Naive thymus-derived CD4-positive, alpha-beta T cell (primary cell): ENCODE measurements at regions of chr2 and their contacts with region 1.

Region 1: GRCh38 chr2:98669675-98670074 is 61.3 kb downstream of the MGAT4A start:
- DNase-seq: no peak
- ATAC-seq: no peak
- H3K4me3 ChIP-seq: no peak overlapping the region
- H3K4me3 Mint-ChIP-seq: no peak overlapping the region
- H3K27ac ChIP-seq: peak overlapping the region; percentile 6
- H3K27ac Mint-ChIP-seq: peak overlapping the region in 8 of 9 donors; percentile 55 to 89 (median 80)
- H3K4me1 ChIP-seq: peaks cover 21 to 29% of the 10 kb centered on the region in 2 donors
- H3K4me1 Mint-ChIP-seq: peaks cover 28 to 91% (median 74%) of the 10 kb centered on the region in 7 donors
- H3K27me3 ChIP-seq: no peaks in the 10 kb centered on the region
- H3K27me3 Mint-ChIP-seq: no peaks in the 10 kb centered on the region

Region 2: DNA sequence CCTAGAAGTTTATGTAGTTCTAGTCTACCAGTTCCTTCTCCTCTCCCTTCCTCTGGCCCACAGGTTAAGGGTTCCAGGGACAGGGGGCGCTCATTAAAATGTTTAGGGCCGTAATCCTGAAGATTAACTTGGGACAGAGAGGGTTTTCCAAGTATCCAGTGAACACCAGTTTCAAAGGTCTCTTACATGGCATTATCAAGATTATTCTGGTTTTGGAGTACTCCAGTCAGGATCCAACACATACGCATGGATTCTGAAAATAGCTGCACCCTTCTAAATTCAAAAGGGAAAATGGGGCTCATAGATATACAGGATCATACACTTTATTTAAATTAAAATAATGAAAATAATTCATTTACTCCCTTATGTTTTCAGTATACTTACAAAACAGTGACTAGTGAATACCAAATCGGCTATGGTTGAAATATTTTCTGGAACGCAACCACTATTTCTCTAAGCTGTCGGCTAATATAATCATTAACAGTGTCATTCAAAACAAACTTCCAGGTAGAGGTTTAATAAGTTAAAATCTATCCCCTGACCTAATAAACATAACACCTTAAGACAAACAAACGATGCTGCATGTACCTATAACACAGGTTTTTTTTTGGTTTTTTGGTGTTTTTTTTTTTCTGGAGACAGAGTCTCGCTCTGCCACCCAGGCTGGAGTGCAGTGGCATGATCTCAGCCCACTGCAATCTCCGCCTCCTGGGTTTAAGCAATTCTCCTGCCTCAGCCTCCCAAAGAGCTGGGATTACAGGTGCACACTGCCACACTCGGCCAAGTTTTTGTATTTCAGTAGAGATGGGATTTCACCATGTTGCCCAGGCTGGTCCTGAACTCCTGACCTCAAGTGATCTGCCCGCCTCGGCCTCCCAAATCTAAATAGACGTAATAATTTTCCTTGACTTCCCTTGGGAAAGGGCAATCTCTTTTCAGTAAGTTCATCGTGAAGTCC is 16.5 kb after region 1 on chr2:
- CTCF ChIA-PET with region 1: interaction called, 4 read pairs
- POLR2A ChIA-PET with region 1: interaction called, 7 read pairs
- intact Hi-C with region 1: loop called in 1 of 2 experiments (anchors 2 kb)
- DNase-seq: no peak
- ATAC-seq: no peak
- H3K4me3 ChIP-seq: no peak overlapping the region
- H3K4me3 Mint-ChIP-seq: peak overlapping the region in 4 of 10 donors; percentile 38 to 62 (median 42)
- H3K27ac ChIP-seq: peak overlapping the region; percentile 36
- H3K27ac Mint-ChIP-seq: peak overlapping the region in 8 of 9 donors; percentile 66 to 92 (median 82)
- H3K4me1 ChIP-seq: peaks cover 27 to 42% of the 10 kb centered on the region in 2 donors
- H3K4me1 Mint-ChIP-seq: peaks cover 30 to 94% (median 88%) of the 10 kb centered on the region in 7 donors
- H3K27me3 ChIP-seq: no peaks in the 10 kb centered on the region
- H3K27me3 Mint-ChIP-seq: no peaks in the 10 kb centered on the region